ENCODE measurements at regions of chr5 and their contacts with region 1.

Region 1: GRCh38 chr5:168359832-168360460 is 68.5 kb downstream of the WWC1 start:
- DNase-seq: no peak
- ATAC-seq: no peak
- H3K4me3 ChIP-seq: no peak overlapping the region
- H3K4me3 Mint-ChIP-seq: no peak overlapping the region
- H3K27ac ChIP-seq: no peak overlapping the region
- H3K27ac Mint-ChIP-seq: no peak overlapping the region
- H3K4me1 ChIP-seq: no peaks in the 10 kb centered on the region
- H3K4me1 Mint-ChIP-seq: no peaks in the 10 kb centered on the region
- H3K27me3 ChIP-seq: peaks cover 0 to 9% of the 10 kb centered on the region in 2 experiments
- H3K27me3 Mint-ChIP-seq: no peaks in the 10 kb centered on the region

Region 2: DNA sequence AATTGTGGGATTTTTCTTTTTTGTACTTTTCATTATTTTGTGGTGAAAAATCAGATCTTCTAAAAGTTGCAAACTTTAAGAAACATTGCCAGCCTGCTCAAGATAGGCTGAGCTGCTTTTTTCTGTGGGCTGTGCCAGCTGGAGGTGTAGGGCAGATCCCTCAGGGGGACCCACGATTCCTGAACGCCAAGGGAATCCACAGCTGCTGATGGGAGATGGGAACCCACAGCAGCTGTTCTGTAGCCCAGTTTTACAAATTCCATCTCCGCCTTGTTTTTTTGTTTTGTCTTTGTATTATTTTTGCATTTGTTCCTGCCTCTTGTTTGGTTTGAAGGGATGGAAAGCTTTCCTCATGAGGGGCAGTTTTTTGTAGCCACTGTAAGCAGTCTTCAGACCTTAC is 22.5 kb after region 1 on chr5:
- CTCF ChIA-PET with region 1: interaction called in 1 of 2 experiments, 10 read pairs
- POLR2A ChIA-PET with region 1: no interaction called
- DNase-seq: no peak
- ATAC-seq: no peak
- H3K4me3 ChIP-seq: no peak overlapping the region
- H3K4me3 Mint-ChIP-seq: no peak overlapping the region
- H3K27ac ChIP-seq: peak overlapping the region; percentile 5
- H3K27ac Mint-ChIP-seq: peak overlapping the region in 1 of 2 donors; percentile 71
- H3K4me1 ChIP-seq: peaks cover 0 to 3% of the 10 kb centered on the region in 2 experiments
- H3K4me1 Mint-ChIP-seq: peaks cover 0 to 21% (median 16%) of the 10 kb centered on the region in 3 donors
- H3K27me3 ChIP-seq: no peaks in the 10 kb centered on the region
- H3K27me3 Mint-ChIP-seq: no peaks in the 10 kb centered on the region